A549 (cell line): ENCODE measurements at regions of chr1 and their contacts with region 1.

Region 1: GRCh38 chr1:179002552-179003345 is 22.9 kb upstream of the FAM20B start:
- DNase-seq: peak; percentile 49 to 71
- ATAC-seq: peak; percentile 92 to 94
- H3K4me3 ChIP-seq: peak overlapping the region; percentile 16; the same call in 1 of the 3 replicates
- H3K27ac ChIP-seq: peak overlapping the region; percentile 61 to 67
- H3K4me1 ChIP-seq: peaks cover 10% of the 10 kb centered on the region; the same call in 2 of the 3 replicates
- CTCF ChIP-seq: peak; percentile 95
- EP300 ChIP-seq: no peak
- POLR2A ChIP-seq: no peak
- RAD21 ChIP-seq: peak; percentile 96 to 98

Region 2: GRCh38 chr1:178300352-178300699 is 702.4 kb before region 1 on chr1:
- CTCF ChIA-PET with region 1: interaction called, 15 read pairs
- POLR2A ChIA-PET with region 1: no interaction called
- DNase-seq: no peak
- ATAC-seq: no peak; a peak in 1 of 6 replicates
- H3K4me3 ChIP-seq: no peak overlapping the region
- H3K27ac ChIP-seq: 0 out of 6 replicates have a peak overlapping the region, but pooled peaks of 1 of the 2 experiments have one; percentile 8
- H3K4me1 ChIP-seq: 0 out of 3 replicates have a peak, but pooled peaks cover 3% of the 10 kb centered on the region
- CTCF ChIP-seq: no peak
- EP300 ChIP-seq: no peak
- POLR2A ChIP-seq: no peak
- RAD21 ChIP-seq: no peak

Region 3: GRCh38 chr1:178548107-178548506 is 454.6 kb before region 1 on chr1:
- CTCF ChIA-PET with region 1: interaction called, 352 read pairs
- POLR2A ChIA-PET with region 1: interaction called, 3 read pairs
- DNase-seq: no peak
- ATAC-seq: no peak
- H3K4me3 ChIP-seq: no peak overlapping the region
- H3K27ac ChIP-seq: no peak overlapping the region
- H3K4me1 ChIP-seq: peaks cover 8% of the 10 kb centered on the region; the same call in 2 of the 3 replicates
- CTCF ChIP-seq: no peak
- EP300 ChIP-seq: no peak
- POLR2A ChIP-seq: no peak
- RAD21 ChIP-seq: no peak

Region 4: GRCh38 chr1:178774263-178774662 is 228.5 kb before region 1 on chr1:
- CTCF ChIA-PET with region 1: interaction called, 61 read pairs
- POLR2A ChIA-PET with region 1: no interaction called
- DNase-seq: peak in 1 of 2 experiments; percentile 21
- ATAC-seq: peak in 1 of 2 experiments; percentile 59; a peak in 2 of 6 replicates
- H3K4me3 ChIP-seq: no peak overlapping the region
- H3K27ac ChIP-seq: no peak overlapping the region
- H3K4me1 ChIP-seq: no peaks in the 10 kb centered on the region
- CTCF ChIP-seq: peak; percentile 51
- EP300 ChIP-seq: no peak
- POLR2A ChIP-seq: no peak
- RAD21 ChIP-seq: peak; percentile 67 to 80

Region 5: DNA sequence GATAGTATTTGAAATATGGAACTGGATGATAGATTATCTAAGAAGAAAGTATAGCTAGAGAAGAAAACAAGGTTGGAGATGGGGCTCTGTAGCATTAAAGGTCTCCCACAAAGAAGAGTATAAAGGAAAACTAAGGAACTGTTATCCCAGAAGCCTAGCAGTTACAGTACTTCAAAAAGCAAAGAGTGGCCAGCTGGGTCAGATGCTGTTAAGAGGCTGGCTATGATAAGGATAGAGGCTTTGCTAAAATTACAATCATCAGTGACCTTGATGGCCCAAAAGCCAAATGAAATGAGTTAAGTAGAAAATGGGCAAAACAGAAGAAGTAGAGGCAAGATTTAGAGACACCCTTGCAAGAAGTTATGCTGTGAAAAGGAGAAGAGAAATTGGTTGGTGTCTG is 106.8 kb before region 1 on chr1:
- CTCF ChIA-PET with region 1: no interaction called
- POLR2A ChIA-PET with region 1: no interaction called
- DNase-seq: no peak
- ATAC-seq: no peak
- H3K4me3 ChIP-seq: no peak overlapping the region
- H3K27ac ChIP-seq: no peak overlapping the region
- H3K4me1 ChIP-seq: no peaks in the 10 kb centered on the region
- CTCF ChIP-seq: no peak
- EP300 ChIP-seq: no peak
- POLR2A ChIP-seq: no peak
- RAD21 ChIP-seq: no peak

Region 6: DNA sequence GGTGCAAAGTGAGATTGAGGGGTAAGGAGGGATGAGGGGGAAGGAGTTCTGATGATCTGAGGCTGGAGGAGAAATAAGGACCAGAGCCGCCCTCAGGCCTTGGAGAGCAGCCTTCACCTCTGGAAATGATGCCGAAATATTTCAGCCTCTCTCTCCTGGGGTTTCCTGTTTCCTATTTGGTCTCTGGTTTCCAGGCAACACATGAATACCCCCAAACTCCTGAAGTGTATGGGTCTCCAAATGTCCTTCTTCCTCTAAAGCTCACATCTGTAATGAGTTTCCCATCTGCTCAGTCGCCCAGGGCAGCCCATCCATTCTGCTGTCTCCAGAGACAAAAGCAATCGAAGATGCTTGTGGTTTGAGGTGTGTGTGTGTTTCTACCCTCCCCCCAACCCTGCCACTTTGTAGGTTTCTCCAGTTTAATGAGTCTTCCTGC is 29.1 kb before region 1 on chr1:
- CTCF ChIA-PET with region 1: interaction called, 16 read pairs
- POLR2A ChIA-PET with region 1: no interaction called
- DNase-seq: no peak
- ATAC-seq: no peak
- H3K4me3 ChIP-seq: no peak overlapping the region
- H3K27ac ChIP-seq: no peak overlapping the region
- H3K4me1 ChIP-seq: no peaks in the 10 kb centered on the region
- CTCF ChIP-seq: no peak
- EP300 ChIP-seq: no peak
- POLR2A ChIP-seq: no peak
- RAD21 ChIP-seq: no peak

Region 7: DNA sequence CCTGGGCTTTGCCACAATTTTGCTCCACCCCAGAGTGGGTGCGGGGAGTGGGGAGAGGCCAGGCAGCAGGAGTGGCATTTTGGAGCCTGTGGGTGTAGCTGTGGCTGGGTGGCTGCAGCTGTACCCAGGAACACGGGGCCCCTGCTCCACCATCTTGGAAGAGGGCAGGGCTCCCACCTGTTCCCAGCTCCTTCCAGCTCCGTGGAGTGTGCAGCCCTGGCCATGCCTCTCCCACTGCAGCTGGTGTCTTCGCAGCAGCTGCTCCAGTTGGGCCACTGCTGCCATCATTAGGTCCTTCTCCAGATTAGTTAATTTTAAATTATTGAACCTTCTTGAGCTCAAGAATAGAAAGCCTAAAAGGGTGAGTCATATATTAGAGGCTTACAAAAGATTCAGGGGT is 40.5 kb after region 1 on chr1:
- CTCF ChIA-PET with region 1: interaction called, 10 read pairs
- POLR2A ChIA-PET with region 1: no interaction called
- DNase-seq: no peak
- ATAC-seq: no peak
- H3K4me3 ChIP-seq: no peak overlapping the region
- H3K27ac ChIP-seq: no peak overlapping the region
- H3K4me1 ChIP-seq: peaks cover 23% of the 10 kb centered on the region
- CTCF ChIP-seq: no peak
- EP300 ChIP-seq: no peak
- POLR2A ChIP-seq: no peak
- RAD21 ChIP-seq: no peak

Region 8: DNA sequence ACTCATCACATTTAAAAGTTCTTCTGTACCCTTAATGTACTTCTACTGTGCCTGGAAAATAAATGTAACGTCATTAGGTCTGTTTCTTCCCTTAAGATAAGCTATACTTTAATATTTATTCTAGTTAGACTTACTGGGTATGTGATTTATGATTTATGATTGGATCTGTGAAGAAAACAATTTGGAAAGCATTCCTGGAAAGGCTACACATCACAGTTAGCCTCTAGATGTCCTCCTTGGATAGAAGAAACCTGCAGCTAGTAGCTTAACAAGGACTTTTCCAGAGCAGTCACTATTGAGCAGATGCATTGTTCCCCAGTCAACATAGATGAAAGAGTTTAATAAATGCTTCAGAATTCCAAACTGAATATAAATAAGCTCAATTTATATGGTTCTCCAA is 248.9 kb after region 1 on chr1:
- CTCF ChIA-PET with region 1: no interaction called
- POLR2A ChIA-PET with region 1: no interaction called
- DNase-seq: peak in 1 of 2 experiments; percentile 59
- ATAC-seq: peak; percentile 90 to 93
- H3K4me3 ChIP-seq: no peak overlapping the region
- H3K27ac ChIP-seq: no peak overlapping the region
- H3K4me1 ChIP-seq: no peaks in the 10 kb centered on the region
- CTCF ChIP-seq: peak; percentile 72
- EP300 ChIP-seq: no peak
- POLR2A ChIP-seq: no peak
- RAD21 ChIP-seq: peak; percentile 82

Region 9: GRCh38 chr1:180026556-180026955 is 1023.8 kb after region 1 on chr1:
- CTCF ChIA-PET with region 1: no interaction called
- POLR2A ChIA-PET with region 1: no interaction called
- DNase-seq: no peak
- ATAC-seq: no peak
- H3K4me3 ChIP-seq: no peak overlapping the region
- H3K27ac ChIP-seq: no peak overlapping the region
- H3K4me1 ChIP-seq: no peaks in the 10 kb centered on the region
- CTCF ChIP-seq: no peak
- EP300 ChIP-seq: no peak
- POLR2A ChIP-seq: no peak
- RAD21 ChIP-seq: no peak